Dorsolateral prefrontal cortex (tissue), 120 donors: ENCODE measurements at regions of chr12 and their contacts with region 1.

Region 1: GRCh38 chr12:43501703-43502102 is 50.3 kb downstream of the ADAMTS20 start:
- DNase-seq: no peak
- H3K4me3 ChIP-seq: no peak overlapping the region
- H3K27ac ChIP-seq: no peak overlapping the region
- H3K27me3 ChIP-seq: peaks cover 0 to 5% (median 0%) of the 10 kb centered on the region in 45 donors
- CTCF ChIP-seq: peak in 28 of 56 donors; percentile 6 to 51 (median 21)

Region 2: DNA sequence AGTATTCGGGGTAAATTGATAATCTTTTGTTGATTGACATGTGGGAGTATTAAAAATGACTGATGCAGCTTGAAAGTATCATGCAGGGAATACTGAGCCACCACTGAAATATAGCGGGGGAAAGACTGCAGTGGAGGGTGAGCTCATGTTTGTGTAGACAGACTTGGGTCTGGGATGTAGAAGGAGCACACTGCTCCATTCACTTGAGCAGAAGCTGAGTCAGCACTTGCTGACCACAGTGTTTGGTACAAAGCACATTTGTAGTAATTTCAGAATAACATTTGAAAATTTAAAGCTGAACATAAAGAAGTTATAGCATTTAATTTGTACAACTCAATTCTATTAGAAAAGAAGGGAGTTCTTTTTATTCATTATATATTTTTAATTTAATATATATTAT is 607.9 kb before region 1 on chr12:
- intact Hi-C with region 1: no loop called
- DNase-seq: peak in 1 of 10 donors; percentile 12
- H3K4me3 ChIP-seq: no peak overlapping the region
- H3K27ac ChIP-seq: no peak overlapping the region
- H3K27me3 ChIP-seq: no peaks in the 10 kb centered on the region
- CTCF ChIP-seq: no peak

Region 3: DNA sequence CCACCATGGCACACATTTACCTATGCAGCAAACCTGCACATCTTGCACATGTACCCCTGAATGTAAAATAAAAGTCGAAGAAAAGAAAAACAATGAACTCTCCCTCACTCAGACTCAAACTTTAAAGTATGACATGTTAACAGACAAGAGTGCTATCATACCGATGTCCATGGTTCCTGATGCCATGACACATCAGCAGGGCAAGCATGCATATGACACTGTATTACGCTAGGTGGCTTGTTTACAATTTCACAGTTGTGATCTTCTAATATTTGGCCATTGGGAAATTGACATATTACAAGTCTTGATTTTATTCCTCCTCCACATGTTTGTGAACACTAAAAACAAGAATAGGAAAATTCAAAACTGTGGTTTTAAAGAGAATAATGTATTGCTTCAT is 76.3 kb before region 1 on chr12:
- intact Hi-C with region 1: no loop called
- DNase-seq: no peak
- H3K4me3 ChIP-seq: no peak overlapping the region
- H3K27ac ChIP-seq: no peak overlapping the region
- H3K27me3 ChIP-seq: peaks cover 0 to 2% (median 0%) of the 10 kb centered on the region in 45 donors
- CTCF ChIP-seq: no peak

Region 4: GRCh38 chr12:43728117-43728516 is 226.4 kb after region 1 on chr12:
- intact Hi-C with region 1: loop called in 1 of 2 experiments (anchors 10 kb)
- DNase-seq: no peak
- H3K4me3 ChIP-seq: no peak overlapping the region
- H3K27ac ChIP-seq: no peak overlapping the region
- H3K27me3 ChIP-seq: no peaks in the 10 kb centered on the region
- CTCF ChIP-seq: peak in 53 of 56 donors; percentile 13 to 66 (median 40)